ENCODE measurements at regions of chr13 and their contacts with region 1.

Region 1: DNA sequence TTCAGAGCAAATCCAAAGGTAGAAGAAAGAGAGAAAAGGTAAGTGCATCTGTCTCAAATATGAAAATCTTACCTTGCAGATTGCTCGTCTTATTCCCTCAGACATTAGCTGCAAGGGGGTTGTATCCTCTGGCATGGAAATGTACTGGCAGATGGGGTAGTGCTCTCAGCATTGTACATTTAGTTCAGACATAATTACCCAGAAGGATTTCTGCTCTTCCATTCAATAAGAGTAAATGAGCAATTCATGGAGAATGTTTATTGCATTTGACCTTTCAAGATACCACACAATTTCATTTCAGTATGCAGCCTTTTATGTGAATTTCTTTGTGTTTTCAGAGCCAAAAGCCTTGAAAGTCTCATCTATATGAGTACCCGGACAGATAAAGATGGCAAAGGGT is 63.8 kb downstream of the SCEL start:
- DNase-seq: no peak
- CTCF ChIP-seq: no peak

Region 2: DNA sequence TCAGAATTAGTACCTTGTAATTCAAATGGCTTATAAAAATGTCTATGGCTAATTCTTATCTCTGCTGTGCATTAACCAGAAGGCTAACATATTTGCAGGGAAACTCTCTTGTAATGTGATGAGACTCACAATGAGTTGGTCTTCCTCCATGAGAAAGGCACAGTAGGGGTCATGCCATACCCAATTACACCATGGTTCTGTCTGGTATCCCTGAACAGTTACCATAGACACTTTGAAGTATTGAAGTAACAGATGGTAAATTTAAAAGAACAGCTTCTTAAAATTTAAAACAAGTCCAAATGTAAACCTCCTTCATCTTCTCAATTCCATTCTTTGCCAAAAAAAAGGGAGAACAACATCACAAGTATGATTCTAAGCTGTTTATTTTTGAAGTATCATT is 75.5 kb after region 1 on chr13:
- in situ Hi-C with region 1: no loop called
- DNase-seq: no peak
- CTCF ChIP-seq: no peak

Region 3: GRCh38 chr13:77749344-77749880 is 150.1 kb after region 1 on chr13:
- in situ Hi-C with region 1: loop called (anchors 5 kb)
- DNase-seq: no peak
- CTCF ChIP-seq: no peak

Measured in GM13976 (cell line).